CD4-positive, alpha-beta T cell (primary cell): ENCODE measurements at regions of chr9 and their contacts with region 1.

Region 1: DNA sequence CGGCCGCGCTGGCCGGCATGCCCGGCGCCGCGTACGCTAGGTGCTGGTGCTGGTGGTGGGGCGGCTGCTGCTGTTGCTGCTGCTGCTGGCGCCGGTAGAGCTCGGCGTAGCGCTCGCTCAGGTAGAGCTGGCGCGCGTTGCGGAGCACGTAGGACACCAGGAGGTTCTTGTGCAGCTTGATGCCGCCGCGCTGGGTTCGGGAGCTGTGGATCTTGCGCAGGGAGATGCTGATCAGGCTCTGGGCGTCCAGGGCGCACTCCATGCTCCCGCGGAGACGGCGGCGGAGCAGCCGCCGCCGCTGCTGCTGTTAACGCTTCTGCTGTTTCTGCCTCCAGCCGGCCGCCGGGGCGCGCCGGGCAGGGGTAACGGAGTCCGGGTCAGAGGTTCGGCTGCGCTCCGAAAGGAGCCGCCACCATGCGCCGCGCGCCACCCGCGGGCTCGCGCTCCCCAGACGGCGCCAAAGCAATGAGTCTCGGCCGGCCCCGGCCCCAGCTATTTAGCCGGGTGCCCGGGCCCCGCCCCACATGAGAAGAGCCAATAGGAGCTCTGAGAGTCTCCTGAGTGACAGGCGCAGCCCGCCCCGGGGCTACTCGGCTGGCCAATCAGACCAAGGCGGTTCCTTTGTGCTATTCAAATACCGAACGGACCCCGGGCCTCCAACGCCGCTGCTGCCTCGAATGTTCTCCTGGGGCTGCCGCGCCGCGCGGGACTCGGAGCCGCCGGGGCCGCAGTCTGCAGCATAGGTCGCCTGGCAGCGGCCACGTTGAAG is at the start of gene IER5L:
- DNase-seq: peak; percentile 87 to 96 (median 93)
- ATAC-seq: peak; percentile 89
- H3K4me3 ChIP-seq: peak within 1 kb of the TSS; percentile 75
- H3K4me3 Mint-ChIP-seq: peak within 1 kb of the TSS; percentile 92
- H3K27ac ChIP-seq: no peak within 1 kb of the TSS
- H3K27ac Mint-ChIP-seq: peak within 1 kb of the TSS; percentile 47
- H3K4me1 ChIP-seq: peaks cover 47% of the 10 kb centered on the region
- H3K4me1 Mint-ChIP-seq: peaks cover 7% of the 10 kb centered on the region
- H3K27me3 ChIP-seq: peaks cover 0 to 7% of the 10 kb centered on the region in 2 experiments
- H3K27me3 Mint-ChIP-seq: peaks cover 4% of the 10 kb centered on the region
- CTCF ChIP-seq: no peak
- total RNA-seq, gene IER5L: 5.6 to 6.4 TPM

Region 2: GRCh38 chr9:129006328-129007034 is 171.5 kb before region 1 on chr9:
- CTCF ChIA-PET with region 1: no interaction called
- POLR2A ChIA-PET with region 1: no interaction called
- intact Hi-C with region 1: no loop called
- DNase-seq: peak in 13 of 14 experiments; percentile 17 to 74 (median 43)
- ATAC-seq: peak; percentile 84
- H3K4me3 ChIP-seq: no peak overlapping the region
- H3K4me3 Mint-ChIP-seq: no peak overlapping the region
- H3K27ac ChIP-seq: no peak overlapping the region
- H3K27ac Mint-ChIP-seq: peak overlapping the region; percentile 31
- H3K4me1 ChIP-seq: peaks cover 4% of the 10 kb centered on the region
- H3K4me1 Mint-ChIP-seq: no peaks in the 10 kb centered on the region
- H3K27me3 ChIP-seq: no peaks in the 10 kb centered on the region
- H3K27me3 Mint-ChIP-seq: no peaks in the 10 kb centered on the region
- CTCF ChIP-seq: peak; percentile 77

Region 3: DNA sequence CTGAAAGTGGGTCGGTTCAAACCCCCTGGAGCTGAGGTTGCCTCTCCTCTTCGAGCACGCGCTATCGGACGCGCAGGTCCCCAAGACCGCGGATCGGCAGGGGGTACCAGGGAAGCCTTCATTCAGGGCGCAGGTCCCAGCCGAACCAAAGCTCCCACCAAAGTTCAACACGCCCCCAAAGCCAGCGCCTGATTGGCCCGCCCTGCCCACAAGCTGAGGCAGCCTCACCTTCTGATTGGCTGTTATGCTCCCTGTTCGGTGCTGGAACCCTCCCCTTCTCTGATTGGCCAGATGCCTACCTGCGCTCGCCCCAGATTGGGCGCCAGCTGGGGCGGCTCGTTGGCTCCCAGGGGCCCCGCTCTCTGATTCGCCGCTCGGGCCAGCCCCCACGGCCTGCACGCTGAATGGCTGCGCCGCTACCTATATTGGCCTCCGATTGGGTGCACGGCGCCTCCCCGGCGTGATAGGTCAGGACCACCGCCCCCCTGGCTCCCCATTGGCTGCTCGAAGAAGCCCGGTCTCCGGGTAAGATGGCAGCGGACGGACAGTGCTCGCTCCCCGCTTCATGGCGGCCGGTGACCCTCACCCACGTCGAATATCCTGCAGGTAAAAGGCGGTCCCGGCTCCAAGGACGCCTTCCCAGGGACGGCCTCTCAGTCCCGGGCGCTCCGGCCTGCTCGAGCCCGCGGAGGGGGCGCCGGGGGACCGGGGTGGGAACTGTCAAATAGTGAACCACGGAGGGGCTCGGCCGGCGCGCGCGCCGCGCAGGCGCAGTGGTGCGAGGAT is 97.2 kb before region 1 on chr9 and contains the start of gene DOLPP1:
- CTCF ChIA-PET with region 1: no interaction called
- POLR2A ChIA-PET with region 1: no interaction called
- intact Hi-C with region 1: no loop called
- DNase-seq: peak; percentile 97 to 99 (median 98)
- ATAC-seq: peak; percentile 95
- H3K4me3 ChIP-seq: peak within 1 kb of the TSS; percentile 91
- H3K4me3 Mint-ChIP-seq: peak within 1 kb of the TSS; percentile 96
- H3K27ac ChIP-seq: peak within 1 kb of the TSS; percentile 57
- H3K27ac Mint-ChIP-seq: peak within 1 kb of the TSS; percentile 81
- H3K4me1 ChIP-seq: peaks cover 39% of the 10 kb centered on the region
- H3K4me1 Mint-ChIP-seq: peaks cover 29% of the 10 kb centered on the region
- H3K27me3 ChIP-seq: no peaks in the 10 kb centered on the region
- H3K27me3 Mint-ChIP-seq: no peaks in the 10 kb centered on the region
- CTCF ChIP-seq: no peak
- total RNA-seq, gene DOLPP1: 2.7 to 3.6 TPM

Region 4: GRCh38 chr9:129202613-129203555 is 24.9 kb after region 1 on chr9:
- CTCF ChIA-PET with region 1: interaction called, 3 read pairs
- POLR2A ChIA-PET with region 1: interaction called, 6 read pairs
- intact Hi-C with region 1: loop called in 1 of 2 experiments (anchors 2 kb)
- DNase-seq: peak; percentile 84 to 95 (median 90)
- ATAC-seq: peak; percentile 93
- H3K4me3 ChIP-seq: peak overlapping the region; percentile 54
- H3K4me3 Mint-ChIP-seq: peak overlapping the region; percentile 83
- H3K27ac ChIP-seq: peak overlapping the region in 1 of 2 donors; percentile 41
- H3K27ac Mint-ChIP-seq: peak overlapping the region; percentile 67
- H3K4me1 ChIP-seq: peaks cover 33% of the 10 kb centered on the region
- H3K4me1 Mint-ChIP-seq: peaks cover 18% of the 10 kb centered on the region
- H3K27me3 ChIP-seq: no peaks in the 10 kb centered on the region
- H3K27me3 Mint-ChIP-seq: no peaks in the 10 kb centered on the region
- CTCF ChIP-seq: no peak

Region 5: GRCh38 chr9:129320575-129321263 is 142.7 kb after region 1 on chr9:
- CTCF ChIA-PET with region 1: interaction called, 9 read pairs
- POLR2A ChIA-PET with region 1: interaction called, 15 read pairs
- intact Hi-C with region 1: loop called in 1 of 2 experiments (anchors 5 kb)
- DNase-seq: peak; percentile 16 to 85 (median 42)
- ATAC-seq: peak; percentile 97
- H3K4me3 ChIP-seq: peak overlapping the region; percentile 46
- H3K4me3 Mint-ChIP-seq: peak overlapping the region; percentile 74
- H3K27ac ChIP-seq: peak overlapping the region in 1 of 2 donors; percentile 50
- H3K27ac Mint-ChIP-seq: peak overlapping the region; percentile 67
- H3K4me1 ChIP-seq: peaks cover 24% of the 10 kb centered on the region
- H3K4me1 Mint-ChIP-seq: peaks cover 17% of the 10 kb centered on the region
- H3K27me3 ChIP-seq: no peaks in the 10 kb centered on the region
- H3K27me3 Mint-ChIP-seq: no peaks in the 10 kb centered on the region
- CTCF ChIP-seq: peak; percentile 25

Region 6: DNA sequence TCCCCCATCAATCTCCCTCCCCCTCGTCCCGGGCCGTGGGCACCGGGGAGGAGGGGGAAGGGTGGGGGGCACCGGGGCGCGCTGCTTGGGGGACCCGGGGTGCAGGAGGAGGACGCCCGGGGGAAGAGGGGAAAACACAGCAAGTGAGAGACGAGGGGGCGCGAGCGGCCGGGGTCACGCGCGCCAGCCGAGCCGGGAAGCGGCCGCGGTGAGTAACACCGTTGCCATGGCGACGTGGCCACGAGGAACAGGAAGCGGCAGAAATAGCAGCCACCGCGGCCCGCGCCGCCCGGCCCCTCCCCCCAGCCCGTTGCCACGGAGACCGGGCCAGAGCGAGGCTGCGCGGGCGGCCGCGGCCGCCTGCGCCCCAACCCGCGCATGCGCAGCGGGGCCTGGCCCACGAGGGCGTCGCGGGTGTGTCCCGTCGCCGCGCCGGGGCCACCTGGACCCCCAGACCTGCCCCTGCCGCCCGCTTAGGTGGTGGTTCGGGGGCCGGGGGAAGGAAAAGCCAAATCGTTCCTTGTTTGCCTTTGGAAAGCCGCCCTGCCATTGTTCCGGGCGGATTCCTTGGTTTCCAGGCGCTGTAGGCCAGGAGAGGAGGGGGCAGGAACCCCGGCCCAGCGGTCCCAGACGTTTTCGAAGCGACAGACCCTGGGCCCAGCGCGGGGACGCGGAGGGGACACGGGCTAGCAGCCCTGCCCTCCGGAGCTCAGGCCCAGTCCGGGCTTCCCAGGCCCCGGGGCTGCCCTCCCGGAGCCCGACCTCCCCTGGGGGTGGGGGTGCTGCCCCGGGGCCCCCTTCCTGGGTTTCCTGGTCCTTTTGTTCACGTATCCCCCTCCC is 235.8 kb after region 1 on chr9:
- CTCF ChIA-PET with region 1: interaction called, 6 read pairs
- POLR2A ChIA-PET with region 1: interaction called, 4 read pairs
- intact Hi-C with region 1: loop called in 1 of 2 experiments (anchors 2 kb)
- DNase-seq: peak; percentile 97 to 100 (median 99)
- ATAC-seq: peak; percentile 74
- H3K4me3 ChIP-seq: peak overlapping the region; percentile 63
- H3K4me3 Mint-ChIP-seq: peak overlapping the region; percentile 95
- H3K27ac ChIP-seq: peak overlapping the region; percentile 95 to 96
- H3K27ac Mint-ChIP-seq: peak overlapping the region; percentile 99
- H3K4me1 ChIP-seq: peaks cover 37% of the 10 kb centered on the region
- H3K4me1 Mint-ChIP-seq: peaks cover 38% of the 10 kb centered on the region
- H3K27me3 ChIP-seq: no peaks in the 10 kb centered on the region
- H3K27me3 Mint-ChIP-seq: no peaks in the 10 kb centered on the region
- CTCF ChIP-seq: no peak

Region 7: GRCh38 chr9:129610473-129611301 is 432.7 kb after region 1 on chr9:
- CTCF ChIA-PET with region 1: interaction called, 17 read pairs
- POLR2A ChIA-PET with region 1: interaction called, 9 read pairs
- intact Hi-C with region 1: loop called in 1 of 2 experiments (anchors 1 kb)
- DNase-seq: peak; percentile 61 to 86 (median 66)
- ATAC-seq: peak; percentile 60
- H3K4me3 ChIP-seq: peak overlapping the region; percentile 51
- H3K4me3 Mint-ChIP-seq: peak overlapping the region; percentile 87
- H3K27ac ChIP-seq: no peak overlapping the region
- H3K27ac Mint-ChIP-seq: peak overlapping the region; percentile 76
- H3K4me1 ChIP-seq: peaks cover 48% of the 10 kb centered on the region
- H3K4me1 Mint-ChIP-seq: peaks cover 43% of the 10 kb centered on the region
- H3K27me3 ChIP-seq: peaks cover 0 to 5% of the 10 kb centered on the region in 2 experiments
- H3K27me3 Mint-ChIP-seq: no peaks in the 10 kb centered on the region
- CTCF ChIP-seq: peak; percentile 88

Region 8: GRCh38 chr9:129868916-129869486 is 691.0 kb after region 1 on chr9:
- CTCF ChIA-PET with region 1: no interaction called
- POLR2A ChIA-PET with region 1: no interaction called
- intact Hi-C with region 1: no loop called
- DNase-seq: peak; percentile 85 to 98 (median 92)
- ATAC-seq: peak; percentile 87
- H3K4me3 ChIP-seq: peak overlapping the region; percentile 40
- H3K4me3 Mint-ChIP-seq: peak overlapping the region; percentile 59
- H3K27ac ChIP-seq: peak overlapping the region; percentile 93 to 96
- H3K27ac Mint-ChIP-seq: peak overlapping the region; percentile 86
- H3K4me1 ChIP-seq: peaks cover 94% of the 10 kb centered on the region
- H3K4me1 Mint-ChIP-seq: peaks cover 75% of the 10 kb centered on the region
- H3K27me3 ChIP-seq: no peaks in the 10 kb centered on the region
- H3K27me3 Mint-ChIP-seq: no peaks in the 10 kb centered on the region
- CTCF ChIP-seq: no peak